ENCODE measurements at regions of chr6 and their contacts with region 1.

Region 1: GRCh38 chr6:50970908-50971307 is 152.2 kb downstream of the TFAP2B start:
- DNase-seq: no peak
- ATAC-seq: no peak
- H3K4me3 ChIP-seq: no peak overlapping the region
- H3K4me3 Mint-ChIP-seq: no peak overlapping the region
- H3K27ac ChIP-seq: no peak overlapping the region
- H3K27ac Mint-ChIP-seq: no peak overlapping the region
- H3K4me1 ChIP-seq: no peaks in the 10 kb centered on the region
- H3K4me1 Mint-ChIP-seq: no peaks in the 10 kb centered on the region
- H3K27me3 ChIP-seq: no peaks in the 10 kb centered on the region
- H3K27me3 Mint-ChIP-seq: no peaks in the 10 kb centered on the region

Region 2: DNA sequence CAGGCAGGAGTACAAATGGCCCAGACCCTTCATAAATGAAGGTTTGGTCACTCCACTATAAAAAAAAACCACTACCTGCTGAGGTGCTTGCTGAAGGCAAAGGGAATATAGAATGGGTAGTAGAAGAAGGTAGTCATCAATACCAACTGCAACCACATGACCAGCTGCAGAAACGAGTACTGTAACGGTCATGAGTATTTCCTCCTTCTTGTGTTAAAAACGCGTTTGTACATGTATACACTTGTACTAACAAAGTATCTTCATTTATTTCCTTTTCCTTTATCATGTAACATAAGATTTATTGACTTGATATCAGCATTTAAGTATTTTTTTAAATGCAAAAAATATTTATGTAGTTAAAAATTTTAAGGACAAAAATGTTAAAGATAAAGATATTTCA is 86.4 kb after region 1 on chr6:
- CTCF ChIA-PET with region 1: no interaction called
- POLR2A ChIA-PET with region 1: interaction called in 1 of 2 experiments, 12 read pairs
- DNase-seq: no peak
- ATAC-seq: no peak
- H3K4me3 ChIP-seq: no peak overlapping the region
- H3K4me3 Mint-ChIP-seq: no peak overlapping the region
- H3K27ac ChIP-seq: no peak overlapping the region
- H3K27ac Mint-ChIP-seq: no peak overlapping the region
- H3K4me1 ChIP-seq: no peaks in the 10 kb centered on the region
- H3K4me1 Mint-ChIP-seq: no peaks in the 10 kb centered on the region
- H3K27me3 ChIP-seq: no peaks in the 10 kb centered on the region
- H3K27me3 Mint-ChIP-seq: no peaks in the 10 kb centered on the region